ENCODE measurements at regions of chr10 and their contacts with region 1.

Region 1: DNA sequence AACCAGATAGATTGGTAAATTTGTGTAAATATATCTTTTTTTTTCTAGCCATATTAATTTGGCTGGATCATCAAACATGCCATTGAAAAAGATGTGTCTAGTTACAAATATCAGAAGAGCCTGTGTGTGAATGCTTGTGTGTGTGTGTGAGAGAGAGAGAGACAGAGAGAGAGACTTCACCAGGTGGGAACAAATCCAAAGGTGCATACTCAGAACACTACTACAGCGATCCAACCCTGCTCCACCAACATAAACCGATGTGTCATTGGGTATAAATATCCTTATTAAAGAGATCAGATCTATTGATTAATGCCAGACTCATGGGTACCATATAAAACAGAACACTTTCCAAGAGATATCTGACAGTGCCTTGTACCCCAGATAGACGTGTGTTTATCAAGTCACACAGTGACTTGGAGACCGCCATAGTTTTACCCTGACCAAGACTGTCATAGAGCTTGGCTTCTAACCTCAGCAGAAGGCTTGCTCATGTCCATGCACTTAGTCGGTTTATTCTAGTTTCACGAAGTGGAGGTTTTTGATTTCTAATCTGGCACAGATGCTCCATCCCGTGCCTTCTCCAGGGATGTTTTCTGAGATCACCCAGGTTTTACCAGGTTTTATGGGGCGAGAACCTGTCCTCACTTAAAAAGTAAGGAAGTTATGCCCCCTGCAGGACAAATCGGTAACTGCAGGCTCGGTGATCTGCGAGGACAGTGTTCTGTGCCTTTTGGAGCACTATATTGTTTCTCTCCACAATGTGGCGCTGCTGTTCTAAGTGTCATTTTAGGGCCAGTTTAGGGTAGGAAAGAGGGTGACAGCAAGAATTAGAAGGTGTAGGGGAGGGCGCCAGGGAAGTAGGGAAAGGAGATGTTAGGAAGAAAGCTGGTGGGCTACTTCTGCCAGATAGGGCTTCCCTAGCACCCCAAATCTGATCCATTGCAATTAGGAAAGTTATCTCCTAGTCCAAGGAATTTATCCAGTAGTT is 29.3 kb upstream of the WNT8B start:
- DNase-seq: peak; percentile 89
- ATAC-seq: peak; percentile 99
- H3K4me3 ChIP-seq: no peak overlapping the region
- H3K27ac ChIP-seq: no peak overlapping the region
- H3K4me1 ChIP-seq: no peaks in the 10 kb centered on the region
- H3K27me3 ChIP-seq: peaks cover 3% of the 10 kb centered on the region; the same call in 1 of the 2 replicates
- CTCF ChIP-seq: peak; percentile 100; the same call in 1 of the 2 replicates
- POLR2A ChIP-seq: peak; percentile 66; the same call in 1 of the 2 replicates
- RAD21 ChIP-seq: peak; percentile 99

Region 2: DNA sequence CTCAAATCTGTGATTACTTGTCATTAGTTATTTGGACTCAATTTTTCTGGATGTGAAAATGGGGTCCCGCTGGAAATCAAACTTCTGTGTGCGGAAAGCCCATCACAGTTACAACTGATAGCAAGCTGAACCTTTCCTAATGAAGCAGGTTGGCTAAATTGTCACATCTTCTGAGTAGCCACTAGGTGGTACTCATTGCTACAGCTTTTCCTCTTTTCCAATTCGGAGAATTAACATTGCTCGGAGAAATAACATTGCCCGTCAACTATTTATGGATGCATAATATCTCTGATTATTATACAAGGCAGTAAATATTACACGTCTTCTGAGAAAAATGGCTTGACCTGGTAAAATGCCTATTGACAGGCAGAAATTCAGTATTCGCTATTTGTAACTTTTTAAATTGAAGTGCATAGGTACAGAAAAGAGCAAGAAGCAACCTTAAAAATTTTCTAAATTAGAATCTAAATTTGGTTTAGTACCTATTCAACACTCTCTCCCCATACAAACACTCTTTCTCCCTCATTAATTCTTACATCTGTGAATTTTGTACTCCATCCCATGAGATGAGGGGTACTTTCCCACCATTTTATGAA is 129.7 kb before region 1 on chr10:
- CTCF ChIA-PET with region 1: no interaction called
- POLR2A ChIA-PET with region 1: interaction called, 5 read pairs
- dilution Hi-C with region 1: no loop called
- in situ Hi-C with region 1: loop called (anchors 10 kb)
- intact Hi-C with region 1: loop called (anchors 1 kb)
- DNase-seq: peak; percentile 30
- ATAC-seq: peak; percentile 81
- H3K4me3 ChIP-seq: no peak overlapping the region
- H3K27ac ChIP-seq: no peak overlapping the region
- H3K4me1 ChIP-seq: no peaks in the 10 kb centered on the region
- H3K27me3 ChIP-seq: peaks cover 16% of the 10 kb centered on the region
- CTCF ChIP-seq: peak; percentile 64
- POLR2A ChIP-seq: no peak
- RAD21 ChIP-seq: peak; percentile 65

Region 3: DNA sequence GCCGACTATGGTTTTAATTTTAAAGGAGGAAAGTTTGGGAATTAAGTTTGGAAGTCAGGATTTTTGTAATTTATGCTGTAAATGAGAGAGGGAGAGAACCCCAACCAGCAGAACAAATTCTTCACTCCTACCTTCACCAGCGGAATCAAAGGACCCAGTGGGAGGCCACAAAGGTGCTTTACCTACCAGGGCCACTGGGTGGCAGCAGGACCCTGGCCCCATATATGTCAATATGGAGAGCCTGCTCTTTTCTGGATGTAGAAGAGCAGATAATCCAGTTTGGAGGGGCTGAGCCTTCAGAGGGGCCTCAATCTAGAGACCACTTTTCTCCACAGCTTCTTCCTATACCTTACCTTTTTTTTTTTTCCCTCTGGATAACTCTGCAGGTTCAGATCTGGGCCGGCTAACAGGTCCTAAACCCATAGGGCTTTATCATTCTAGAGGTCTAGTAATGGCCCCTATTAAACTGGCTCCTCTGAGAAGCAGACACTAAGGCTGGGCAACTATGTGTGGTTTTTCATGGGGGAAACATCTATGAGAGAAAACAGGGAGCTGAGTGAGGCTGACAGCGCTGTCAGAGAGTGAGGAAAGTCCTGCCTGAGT is 95.0 kb before region 1 on chr10:
- CTCF ChIA-PET with region 1: interaction called, 19 read pairs
- POLR2A ChIA-PET with region 1: no interaction called
- dilution Hi-C with region 1: no loop called
- in situ Hi-C with region 1: loop called (anchors 5 kb)
- intact Hi-C with region 1: loop called (anchors 1 kb)
- DNase-seq: peak; percentile 45
- ATAC-seq: peak; percentile 81
- H3K4me3 ChIP-seq: no peak overlapping the region
- H3K27ac ChIP-seq: no peak overlapping the region
- H3K4me1 ChIP-seq: peaks cover 8% of the 10 kb centered on the region; the same call in 1 of the 2 replicates
- H3K27me3 ChIP-seq: peaks cover 18% of the 10 kb centered on the region
- CTCF ChIP-seq: peak; percentile 95
- POLR2A ChIP-seq: no peak
- RAD21 ChIP-seq: peak; percentile 97